Naive thymus-derived CD4-positive, alpha-beta T cell (primary cell): ENCODE measurements at regions of chr20 and their contacts with region 1.

Region 1: DNA sequence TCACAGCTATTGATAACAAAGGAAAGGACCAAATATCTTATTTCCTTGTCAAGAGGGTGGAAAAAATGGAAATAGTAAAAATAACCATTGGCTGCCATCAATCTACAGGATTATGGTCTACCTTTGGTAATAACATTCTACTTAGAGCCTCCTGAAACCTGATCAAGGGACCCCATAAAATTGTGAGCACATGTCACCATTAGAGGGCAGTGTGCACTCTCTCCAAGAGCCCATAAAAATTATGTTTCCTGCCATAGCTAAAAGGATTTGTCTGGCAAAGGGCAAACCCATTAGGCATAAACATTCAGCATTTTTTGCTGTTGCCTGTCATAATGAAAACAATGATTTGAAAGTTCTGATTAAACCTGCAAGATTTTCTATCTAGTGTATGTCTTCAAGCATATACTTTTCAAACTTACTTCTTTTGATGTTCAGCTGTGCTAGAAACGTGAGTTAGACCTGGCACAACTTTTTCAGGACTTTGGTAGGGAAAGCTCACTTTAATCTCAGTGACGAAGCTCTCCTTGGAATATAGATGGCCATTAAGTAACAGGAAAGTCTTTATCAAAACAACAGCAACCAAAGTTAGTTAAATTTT is 120.7 kb upstream of the ZFP64 start:
- DNase-seq: peak in 8 of 9 donors; percentile 35 to 76 (median 70)
- ATAC-seq: peak; percentile 85
- H3K4me3 ChIP-seq: no peak overlapping the region
- H3K4me3 Mint-ChIP-seq: peak overlapping the region in 2 of 10 donors; percentile 32 to 41
- H3K27ac ChIP-seq: no peak overlapping the region
- H3K27ac Mint-ChIP-seq: peak overlapping the region in 4 of 9 donors; percentile 21 to 57 (median 38)
- H3K4me1 ChIP-seq: peaks cover 0 to 8% of the 10 kb centered on the region in 2 donors
- H3K4me1 Mint-ChIP-seq: peaks cover 7 to 57% (median 40%) of the 10 kb centered on the region in 7 donors
- H3K27me3 ChIP-seq: no peaks in the 10 kb centered on the region
- H3K27me3 Mint-ChIP-seq: peaks cover 0 to 7% (median 0%) of the 10 kb centered on the region in 5 donors

Region 2: GRCh38 chr20:50680412-50680908 is 1631.8 kb before region 1 on chr20:
- CTCF ChIA-PET with region 1: no interaction called
- POLR2A ChIA-PET with region 1: no interaction called
- intact Hi-C with region 1: no loop called
- DNase-seq: no peak
- ATAC-seq: no peak
- H3K4me3 ChIP-seq: no peak overlapping the region
- H3K4me3 Mint-ChIP-seq: no peak overlapping the region
- H3K27ac ChIP-seq: no peak overlapping the region
- H3K27ac Mint-ChIP-seq: no peak overlapping the region
- H3K4me1 ChIP-seq: no peaks in the 10 kb centered on the region
- H3K4me1 Mint-ChIP-seq: no peaks in the 10 kb centered on the region
- H3K27me3 ChIP-seq: no peaks in the 10 kb centered on the region
- H3K27me3 Mint-ChIP-seq: peaks cover 0 to 1% (median 0%) of the 10 kb centered on the region in 5 donors

Region 3: DNA sequence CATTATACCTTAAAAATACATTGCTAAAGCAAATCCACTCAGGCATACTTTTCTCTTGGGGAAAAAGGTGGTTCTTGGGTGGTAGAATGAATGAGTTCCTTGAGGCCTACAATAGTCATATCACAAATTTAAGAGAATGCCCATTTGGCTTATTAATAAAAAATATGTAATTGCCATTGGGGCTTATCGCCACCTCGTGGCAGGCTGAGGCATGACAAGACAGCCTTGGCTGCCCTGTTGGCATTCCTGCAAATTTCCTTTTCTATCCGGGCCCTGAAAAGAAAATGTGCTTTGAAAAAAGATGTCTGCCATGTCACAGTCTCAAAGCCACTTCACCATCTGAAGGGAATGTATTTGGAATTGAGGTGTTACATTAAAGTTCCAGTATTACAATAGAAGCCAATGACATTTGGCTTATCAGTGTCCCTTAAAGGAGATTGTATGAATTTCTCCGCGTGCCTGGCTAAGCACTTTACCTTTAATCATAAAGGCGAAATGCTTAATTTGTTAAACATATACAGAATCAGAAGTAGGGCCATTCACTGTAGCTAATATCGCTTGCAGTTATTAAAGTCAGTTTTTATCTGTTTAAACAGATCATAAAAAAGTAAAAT is 67.6 kb after region 1 on chr20:
- CTCF ChIA-PET with region 1: interaction called, 13 read pairs
- POLR2A ChIA-PET with region 1: no interaction called
- intact Hi-C with region 1: loop called in 1 of 2 experiments (anchors 1 kb)
- DNase-seq: peak in 6 of 9 donors; percentile 13 to 35 (median 22)
- ATAC-seq: no peak
- H3K4me3 ChIP-seq: no peak overlapping the region
- H3K4me3 Mint-ChIP-seq: peak overlapping the region in 1 of 10 donors; percentile 14
- H3K27ac ChIP-seq: no peak overlapping the region
- H3K27ac Mint-ChIP-seq: peak overlapping the region in 5 of 9 donors; percentile 6 to 71 (median 45)
- H3K4me1 ChIP-seq: peaks cover 0 to 14% of the 10 kb centered on the region in 2 donors
- H3K4me1 Mint-ChIP-seq: peaks cover 0 to 47% (median 25%) of the 10 kb centered on the region in 7 donors
- H3K27me3 ChIP-seq: no peaks in the 10 kb centered on the region
- H3K27me3 Mint-ChIP-seq: peaks cover 0 to 2% (median 0%) of the 10 kb centered on the region in 5 donors

Region 4: DNA sequence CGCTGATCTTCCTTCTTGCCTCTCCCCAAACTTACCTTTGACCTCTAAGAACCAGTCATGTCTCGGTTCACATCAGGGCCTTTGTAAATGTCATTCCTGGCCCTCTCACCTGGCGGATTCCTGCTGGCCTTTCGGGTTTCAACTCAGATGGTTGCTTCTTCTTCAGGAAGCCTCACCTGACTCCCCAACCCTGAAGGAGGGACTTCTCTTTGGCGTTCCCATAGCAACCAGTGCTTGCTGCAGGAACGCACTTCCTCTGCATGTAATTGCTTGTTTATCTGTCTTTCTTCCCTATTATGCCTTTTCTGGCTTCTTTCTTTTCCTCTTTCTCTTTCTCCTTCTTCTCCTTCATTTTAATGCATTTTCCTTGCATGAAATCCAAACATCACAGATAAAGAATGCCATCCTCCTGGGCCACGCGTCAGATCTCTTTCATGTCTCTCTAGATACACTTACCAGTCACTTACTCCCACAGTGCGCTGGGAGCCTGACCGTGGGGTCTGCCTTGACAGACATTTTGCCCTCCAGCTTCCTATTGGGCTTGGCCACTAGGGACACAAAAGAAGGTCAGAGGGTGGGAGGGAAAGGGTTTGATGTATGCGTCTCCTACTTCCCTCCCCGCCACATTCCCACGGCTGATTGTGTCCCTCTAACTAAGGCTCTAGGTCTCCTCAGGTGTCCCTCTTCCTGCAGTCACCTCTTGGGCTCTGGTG is 364.2 kb after region 1 on chr20:
- CTCF ChIA-PET with region 1: no interaction called
- POLR2A ChIA-PET with region 1: no interaction called
- intact Hi-C with region 1: loop called in 1 of 2 experiments (anchors 5 kb)
- DNase-seq: peak in 6 of 9 donors; percentile 5 to 42 (median 25)
- ATAC-seq: no peak
- H3K4me3 ChIP-seq: no peak overlapping the region
- H3K4me3 Mint-ChIP-seq: peak overlapping the region in 5 of 10 donors; percentile 9 to 52 (median 24)
- H3K27ac ChIP-seq: no peak overlapping the region
- H3K27ac Mint-ChIP-seq: peak overlapping the region in 8 of 9 donors; percentile 3 to 82 (median 44)
- H3K4me1 ChIP-seq: peaks cover 0 to 8% of the 10 kb centered on the region in 2 donors
- H3K4me1 Mint-ChIP-seq: peaks cover 0 to 22% (median 14%) of the 10 kb centered on the region in 7 donors
- H3K27me3 ChIP-seq: no peaks in the 10 kb centered on the region
- H3K27me3 Mint-ChIP-seq: peaks cover 0 to 7% (median 4%) of the 10 kb centered on the region in 5 donors

Region 5: DNA sequence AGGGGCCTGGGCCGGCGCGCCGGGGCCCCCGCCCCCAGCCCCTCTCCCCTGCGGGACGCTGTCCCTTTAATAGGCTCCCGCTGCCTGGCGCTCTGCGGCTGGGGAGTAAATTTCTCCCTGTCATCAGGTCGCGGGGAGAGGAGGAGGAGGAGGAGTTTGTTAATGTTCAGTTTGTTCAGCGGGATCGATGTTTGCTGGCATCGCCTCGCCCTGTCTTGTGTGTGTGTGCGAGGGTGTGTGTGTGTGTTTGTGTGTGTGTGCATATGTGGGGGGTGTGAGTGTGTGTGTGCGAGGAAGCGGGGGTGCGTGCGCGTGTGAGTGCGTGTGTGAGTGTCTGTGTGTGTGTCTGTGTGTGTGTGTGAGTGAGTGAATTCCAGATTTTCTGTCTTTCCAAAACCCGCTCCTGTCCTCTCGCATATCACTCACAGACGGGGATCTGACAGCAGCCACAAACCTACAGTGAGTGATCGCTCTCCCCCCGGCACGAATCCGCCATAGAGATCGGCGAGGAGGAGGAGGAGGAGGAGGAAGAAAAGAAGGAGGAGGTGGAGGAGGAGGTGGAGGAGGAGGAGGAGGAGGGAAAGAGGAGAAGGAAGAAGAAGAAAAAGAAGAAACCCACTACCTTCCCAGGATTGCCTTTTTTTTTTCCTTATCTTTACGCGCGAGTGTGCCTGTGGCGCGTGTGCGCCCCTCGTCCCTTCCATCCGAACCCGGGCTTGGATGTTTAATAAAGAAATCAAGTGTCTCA is 660.1 kb after region 1 on chr20 and contains the start of gene TSHZ2:
- CTCF ChIA-PET with region 1: interaction called, 3 read pairs
- POLR2A ChIA-PET with region 1: interaction called, 4 read pairs
- intact Hi-C with region 1: loop called (anchors 2 to 5 kb)
- DNase-seq: peak; percentile 27 to 75 (median 58)
- ATAC-seq: peak; percentile 66
- H3K4me3 ChIP-seq: peak within 1 kb of the TSS; percentile 65
- H3K4me3 Mint-ChIP-seq: peak within 1 kb of the TSS; percentile 90 to 100 (median 96)
- H3K27ac ChIP-seq: peak within 1 kb of the TSS; percentile 97
- H3K27ac Mint-ChIP-seq: peak within 1 kb of the TSS; percentile 93 to 97 (median 95)
- H3K4me1 ChIP-seq: peaks cover 0 to 12% of the 10 kb centered on the region in 2 donors
- H3K4me1 Mint-ChIP-seq: peaks cover 12 to 45% (median 38%) of the 10 kb centered on the region in 7 donors
- H3K27me3 ChIP-seq: peaks cover 0 to 3% of the 10 kb centered on the region in 2 donors
- H3K27me3 Mint-ChIP-seq: peaks cover 0 to 32% (median 7%) of the 10 kb centered on the region in 5 donors
- total RNA-seq, gene TSHZ2: 21.0 to 84.5 (median 59.2) TPM

Region 6: GRCh38 chr20:53381568-53382262 is 1069.5 kb after region 1 on chr20:
- CTCF ChIA-PET with region 1: no interaction called
- POLR2A ChIA-PET with region 1: no interaction called
- intact Hi-C with region 1: loop called in 1 of 2 experiments (anchors 10 kb)
- DNase-seq: no peak
- ATAC-seq: no peak
- H3K4me3 ChIP-seq: no peak overlapping the region
- H3K4me3 Mint-ChIP-seq: no peak overlapping the region
- H3K27ac ChIP-seq: no peak overlapping the region
- H3K27ac Mint-ChIP-seq: peak overlapping the region in 4 of 9 donors; percentile 4 to 56 (median 40)
- H3K4me1 ChIP-seq: no peaks in the 10 kb centered on the region
- H3K4me1 Mint-ChIP-seq: peaks cover 0 to 9% (median 1%) of the 10 kb centered on the region in 7 donors
- H3K27me3 ChIP-seq: no peaks in the 10 kb centered on the region
- H3K27me3 Mint-ChIP-seq: no peaks in the 10 kb centered on the region

Region 7: DNA sequence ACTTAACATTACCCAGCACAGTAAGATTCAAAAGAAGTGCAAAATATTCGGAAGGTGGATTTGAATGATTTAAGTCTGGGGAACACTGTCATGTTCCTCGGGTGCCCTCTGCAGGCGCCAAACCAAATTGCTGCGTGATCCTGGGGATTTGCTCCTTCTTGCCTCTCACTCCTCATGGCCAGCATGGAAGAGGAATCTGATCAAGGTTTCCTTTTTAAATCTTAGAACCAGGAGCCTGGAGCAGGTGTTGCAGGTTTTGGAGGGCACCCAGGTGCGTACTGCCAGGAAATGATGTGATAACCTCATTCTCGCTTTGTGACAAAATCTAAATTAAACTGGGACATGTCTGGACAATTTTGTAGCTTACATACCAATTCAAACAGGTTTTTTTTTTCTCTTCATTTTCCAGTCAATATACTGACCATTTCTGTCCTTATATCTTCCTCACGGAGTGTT is 1887.5 kb after region 1 on chr20:
- CTCF ChIA-PET with region 1: no interaction called
- POLR2A ChIA-PET with region 1: no interaction called
- intact Hi-C with region 1: loop called in 1 of 2 experiments (anchors 1 kb)
- DNase-seq: peak; percentile 32 to 69 (median 53)
- ATAC-seq: peak; percentile 78
- H3K4me3 ChIP-seq: no peak overlapping the region
- H3K4me3 Mint-ChIP-seq: no peak overlapping the region
- H3K27ac ChIP-seq: no peak overlapping the region
- H3K27ac Mint-ChIP-seq: no peak overlapping the region
- H3K4me1 ChIP-seq: no peaks in the 10 kb centered on the region
- H3K4me1 Mint-ChIP-seq: peaks cover 0 to 4% (median 0%) of the 10 kb centered on the region in 7 donors
- H3K27me3 ChIP-seq: no peaks in the 10 kb centered on the region
- H3K27me3 Mint-ChIP-seq: peaks cover 0 to 4% (median 0%) of the 10 kb centered on the region in 5 donors